ENCODE measurements at regions of chr3 and their contacts with region 1.

Region 1: DNA sequence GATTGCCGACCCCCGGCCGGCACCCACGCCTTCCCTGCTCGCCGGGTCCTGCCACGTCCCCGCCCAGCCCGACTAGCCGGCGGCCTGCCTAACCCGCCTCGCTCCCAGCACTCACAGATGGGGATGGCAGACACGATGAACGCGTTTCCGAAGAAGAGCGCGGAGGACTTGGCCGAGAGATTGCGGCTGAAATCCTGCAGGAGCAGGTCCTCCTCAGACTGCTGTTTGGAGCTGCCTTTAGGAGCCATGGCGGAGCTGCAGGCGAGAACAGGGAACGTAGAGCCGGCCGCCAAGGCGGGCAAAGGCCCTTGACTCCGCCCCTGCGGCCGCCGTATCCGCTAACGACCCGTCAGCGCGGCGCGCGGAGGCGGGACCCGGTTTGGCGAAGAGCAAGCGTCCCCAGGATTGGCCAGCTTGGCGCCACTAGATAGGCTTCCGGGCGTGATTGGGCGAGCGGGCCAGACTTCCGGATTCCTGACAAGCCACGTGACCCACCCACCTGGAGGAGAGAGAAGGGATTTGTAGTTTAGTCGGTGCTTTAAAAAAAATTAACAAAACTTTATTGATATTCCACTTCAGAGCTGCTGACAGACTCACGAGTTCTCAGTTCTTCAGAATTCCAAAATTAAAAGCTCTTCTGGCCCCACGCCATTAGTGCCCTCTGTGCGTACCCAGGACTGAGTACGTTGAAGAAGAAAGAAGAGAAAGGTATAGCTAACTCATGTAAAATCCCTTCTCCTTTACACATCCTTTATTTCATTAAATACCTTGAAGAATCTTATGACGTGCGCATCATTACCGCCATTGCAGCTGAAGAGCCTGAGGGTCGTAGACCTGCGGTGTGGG is at the start of gene SSR3:
- DNase-seq: peak; percentile 99
- H3K4me3 Mint-ChIP-seq: peak within 1 kb of the TSS; percentile 95
- H3K27ac Mint-ChIP-seq: peak within 1 kb of the TSS; percentile 94
- H3K4me1 Mint-ChIP-seq: peaks cover 53% of the 10 kb centered on the region
- H3K27me3 Mint-ChIP-seq: no peaks in the 10 kb centered on the region
- total RNA-seq, gene SSR3: 149 and 162 TPM in 2 replicates

Region 2: GRCh38 chr3:156483961-156484787 is 70.9 kb before region 1 on chr3:
- intact Hi-C with region 1: loop called (anchors 1 kb)
- DNase-seq: peak; percentile 56
- H3K4me3 Mint-ChIP-seq: peak overlapping the region; percentile 73
- H3K27ac Mint-ChIP-seq: peak overlapping the region; percentile 86
- H3K4me1 Mint-ChIP-seq: peaks cover 42% of the 10 kb centered on the region
- H3K27me3 Mint-ChIP-seq: peaks cover 6% of the 10 kb centered on the region

Region 3: DNA sequence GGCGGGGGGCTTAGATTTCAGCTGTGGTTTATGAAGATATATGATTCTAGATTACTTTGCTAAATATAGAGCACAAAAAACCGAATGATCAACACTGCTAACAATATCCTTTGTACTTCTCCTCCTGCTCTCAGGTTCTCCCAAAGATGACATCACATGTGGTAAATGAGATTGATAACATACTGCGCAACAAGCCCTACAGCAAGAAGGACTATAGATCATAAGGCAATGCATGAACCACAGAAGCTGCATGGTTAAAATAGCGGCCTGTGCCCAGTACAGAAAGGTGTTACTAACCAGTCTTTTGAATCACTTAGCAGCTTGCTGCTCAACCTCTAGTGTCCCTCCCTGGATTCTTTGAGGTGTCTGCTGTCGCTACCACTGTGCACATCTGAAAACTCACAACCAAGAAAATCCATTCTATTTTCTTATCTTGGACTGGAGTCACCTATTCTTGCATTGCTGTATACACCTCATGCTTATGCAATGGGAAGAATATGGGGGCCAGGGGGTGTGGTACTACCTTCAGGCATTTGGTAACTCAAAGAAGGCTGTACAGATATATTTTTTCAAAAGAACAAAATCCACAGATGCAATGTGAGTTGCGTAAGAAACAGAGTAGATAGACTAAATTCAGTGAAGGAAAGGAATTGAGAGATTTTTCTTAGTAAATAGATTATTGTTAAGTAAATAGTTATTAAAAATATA is 18.4 kb before region 1 on chr3:
- intact Hi-C with region 1: loop called (anchors 1 kb)
- DNase-seq: no peak
- H3K4me3 Mint-ChIP-seq: no peak overlapping the region
- H3K27ac Mint-ChIP-seq: no peak overlapping the region
- H3K4me1 Mint-ChIP-seq: peaks cover 19% of the 10 kb centered on the region
- H3K27me3 Mint-ChIP-seq: no peaks in the 10 kb centered on the region

Region 4: DNA sequence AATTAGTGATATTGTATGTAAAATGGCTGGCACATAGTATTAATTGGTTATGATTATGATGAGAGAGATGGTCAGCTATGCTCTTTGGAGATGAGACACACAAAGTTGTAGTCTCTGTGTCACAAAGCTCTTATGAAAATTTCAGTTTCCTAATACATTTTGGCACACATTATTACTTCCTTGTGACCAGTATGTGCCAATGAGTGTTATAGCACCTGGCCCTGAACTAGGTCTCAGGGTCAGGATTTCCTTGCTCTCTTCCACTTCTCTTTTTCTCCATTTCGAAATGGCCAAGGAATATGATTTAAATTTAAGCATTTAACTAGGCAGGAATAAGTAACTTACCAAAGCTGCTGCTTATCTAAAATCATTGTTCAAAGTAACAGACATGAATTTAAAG is 147.3 kb after region 1 on chr3:
- intact Hi-C with region 1: no loop called
- DNase-seq: no peak
- H3K4me3 Mint-ChIP-seq: no peak overlapping the region
- H3K27ac Mint-ChIP-seq: no peak overlapping the region
- H3K4me1 Mint-ChIP-seq: peaks cover 68% of the 10 kb centered on the region
- H3K27me3 Mint-ChIP-seq: no peaks in the 10 kb centered on the region

Region 5: DNA sequence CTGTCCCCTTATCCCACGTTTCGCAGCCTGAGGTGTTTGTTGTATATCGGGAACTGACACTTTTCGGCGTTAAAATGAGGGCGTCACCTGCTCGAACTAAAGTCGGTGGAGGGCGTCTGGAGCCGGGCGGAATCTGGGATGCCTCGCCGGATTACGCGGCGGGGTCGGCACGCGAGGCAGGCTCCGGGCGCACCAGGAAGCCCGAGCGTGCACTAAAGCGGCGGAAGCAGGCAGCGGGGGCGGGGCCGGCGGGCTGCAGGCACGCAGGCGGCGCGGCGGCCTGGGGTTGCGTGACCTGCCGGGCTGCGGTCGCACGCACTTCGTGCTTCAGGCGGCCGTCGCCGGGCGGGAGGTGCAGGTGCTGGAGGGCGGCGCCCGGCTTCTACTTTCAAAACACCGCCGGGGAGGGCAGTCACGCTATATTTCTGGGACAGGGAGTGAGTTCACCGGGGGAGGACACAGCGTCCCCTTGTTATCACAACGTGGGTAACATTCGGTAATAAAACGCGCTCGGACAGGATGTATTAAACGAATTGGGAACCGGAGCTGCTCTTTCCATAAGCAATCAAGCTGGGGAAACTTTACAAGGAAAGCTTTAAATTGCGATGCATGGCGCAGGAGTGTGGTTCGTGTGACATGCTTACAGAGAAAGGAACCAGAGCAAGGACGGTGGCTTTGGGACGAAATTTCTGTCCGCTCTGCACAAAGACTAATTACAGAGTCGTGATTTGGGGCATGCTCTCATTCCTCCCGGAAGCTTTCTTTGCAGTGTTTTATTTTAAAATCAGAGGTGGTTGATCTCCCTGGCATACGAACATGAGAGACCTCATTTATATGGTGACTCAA is 262.0 kb after region 1 on chr3:
- intact Hi-C with region 1: loop called (anchors 1 kb)
- DNase-seq: peak; percentile 90
- H3K4me3 Mint-ChIP-seq: peak overlapping the region; percentile 92
- H3K27ac Mint-ChIP-seq: peak overlapping the region; percentile 98
- H3K4me1 Mint-ChIP-seq: peaks cover 75% of the 10 kb centered on the region
- H3K27me3 Mint-ChIP-seq: no peaks in the 10 kb centered on the region

Region 6: DNA sequence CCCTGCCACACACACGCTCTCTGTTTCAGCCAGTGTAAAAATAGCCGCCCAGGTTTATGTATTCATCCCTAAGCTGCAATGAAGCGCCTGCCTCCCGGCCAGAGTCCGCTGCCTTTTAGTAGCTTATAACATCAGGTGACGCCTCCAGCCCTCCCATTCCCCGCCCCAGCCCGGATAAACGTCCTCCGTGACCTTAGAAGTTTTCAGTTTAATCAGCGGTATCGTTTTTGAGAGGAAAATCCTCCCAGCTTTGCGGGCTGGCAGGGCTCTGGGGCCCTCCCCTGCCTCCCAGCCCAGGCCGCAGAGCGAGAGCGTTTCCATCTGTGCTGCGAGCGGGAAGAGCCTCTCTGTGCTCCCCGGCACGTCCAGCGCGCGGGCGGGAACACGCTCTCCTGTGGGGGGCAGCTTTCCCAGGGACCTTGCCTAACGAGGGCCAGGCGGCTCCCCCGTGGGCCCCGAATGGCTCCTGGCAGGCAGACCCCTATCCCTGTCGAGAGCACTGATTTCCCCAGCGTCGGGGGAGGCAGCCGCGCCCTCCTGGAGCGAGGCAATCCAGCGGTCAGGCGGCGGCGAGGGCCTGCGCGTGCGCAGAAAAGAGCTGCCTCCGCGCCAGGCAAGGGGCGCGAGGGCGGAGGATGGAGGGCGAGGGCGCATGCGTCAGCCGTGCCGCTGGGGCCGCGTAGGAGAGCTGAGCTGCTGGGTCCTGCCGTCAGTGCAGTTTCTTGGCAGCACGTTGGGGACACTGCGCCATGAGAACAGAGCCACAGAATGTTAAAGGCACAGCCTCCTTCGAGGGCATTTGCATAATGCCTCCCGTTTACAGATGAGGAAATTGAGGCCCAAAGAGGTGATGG is 533.8 kb after region 1 on chr3:
- intact Hi-C with region 1: loop called (anchors 1 kb)
- DNase-seq: peak; percentile 93
- H3K4me3 Mint-ChIP-seq: peak overlapping the region; percentile 70
- H3K27ac Mint-ChIP-seq: peak overlapping the region; percentile 93
- H3K4me1 Mint-ChIP-seq: peaks cover 76% of the 10 kb centered on the region
- H3K27me3 Mint-ChIP-seq: no peaks in the 10 kb centered on the region

Region 7: DNA sequence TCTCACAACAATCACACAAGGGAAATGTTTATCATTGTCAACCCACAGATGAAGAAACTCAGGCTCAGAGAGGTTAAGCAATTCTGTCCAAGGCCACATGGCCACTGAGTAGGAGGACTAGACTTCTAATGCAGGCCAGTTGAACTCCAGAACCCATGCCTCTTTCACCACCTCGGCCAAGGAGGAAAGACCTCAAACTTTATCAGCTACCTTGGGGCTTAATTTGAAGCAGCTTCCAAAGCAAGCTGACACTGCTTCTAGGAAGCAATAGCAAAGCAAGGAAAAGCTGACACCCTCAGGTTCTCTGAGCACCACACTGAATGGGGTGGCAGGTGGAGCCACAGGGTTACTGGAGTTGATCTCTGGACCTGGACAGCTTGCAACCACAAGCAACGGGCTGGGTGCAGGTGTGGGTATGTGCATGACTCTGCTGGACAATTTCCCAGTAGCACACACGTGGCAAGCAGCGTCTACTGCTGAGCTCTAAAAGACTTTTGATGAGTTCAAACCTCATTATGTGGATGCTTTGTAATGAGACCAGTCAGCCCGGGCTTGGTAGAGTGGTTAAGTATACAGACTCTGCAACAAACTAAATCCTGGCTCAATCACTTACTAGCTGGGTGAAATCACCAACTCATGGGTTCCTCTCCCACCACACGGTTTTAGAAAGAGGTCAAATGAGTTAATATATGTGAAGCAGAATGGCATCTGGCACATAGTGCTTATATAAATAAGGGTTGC is 581.8 kb after region 1 on chr3:
- intact Hi-C with region 1: loop called (anchors 2 kb)
- DNase-seq: no peak
- H3K4me3 Mint-ChIP-seq: no peak overlapping the region
- H3K27ac Mint-ChIP-seq: peak overlapping the region; percentile 35
- H3K4me1 Mint-ChIP-seq: peaks cover 57% of the 10 kb centered on the region
- H3K27me3 Mint-ChIP-seq: no peaks in the 10 kb centered on the region

Region 8: DNA sequence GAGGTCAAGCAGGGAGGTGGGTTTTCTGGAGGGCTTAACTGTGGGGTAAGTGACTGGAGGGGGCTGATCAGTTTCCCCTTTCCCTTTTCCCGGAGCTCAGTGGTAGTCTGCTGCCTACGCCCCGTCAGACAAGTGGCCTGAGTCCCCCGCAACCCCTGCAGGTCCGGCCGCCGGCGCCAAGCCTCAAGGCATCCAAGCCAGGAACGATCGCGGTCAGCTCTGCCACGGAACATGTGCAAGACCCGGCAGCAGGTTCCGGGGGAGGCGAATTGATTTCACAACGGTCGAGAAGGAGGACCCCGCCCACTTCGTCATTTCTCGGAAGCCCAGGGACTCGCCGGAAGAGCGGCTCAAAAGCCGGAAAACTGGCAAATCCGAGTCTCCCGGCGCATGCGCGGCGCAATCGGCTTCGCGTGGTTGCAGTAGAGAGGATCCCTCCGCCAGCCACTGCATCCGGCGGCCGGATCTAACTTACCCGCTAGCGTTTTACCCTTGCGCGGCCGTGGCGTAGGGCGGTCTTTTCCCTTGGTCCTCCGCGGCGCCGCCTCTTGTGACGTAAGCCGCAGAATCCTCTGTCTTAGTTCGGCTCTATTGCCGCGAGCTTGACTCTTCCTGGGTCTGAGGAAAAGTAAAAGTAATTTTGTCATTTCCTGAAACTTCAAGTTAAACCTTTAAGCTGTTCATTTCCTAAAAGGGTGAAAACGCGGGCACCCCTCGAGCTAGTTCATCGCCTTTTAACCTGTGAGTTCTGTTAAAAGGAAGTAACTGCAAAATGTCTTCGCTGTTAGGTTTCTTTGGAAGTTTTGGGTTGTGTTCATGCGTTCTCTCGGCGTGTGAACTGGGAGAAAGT is 619.8 kb after region 1 on chr3:
- intact Hi-C with region 1: loop called (anchors 1 kb)
- DNase-seq: peak; percentile 98
- H3K4me3 Mint-ChIP-seq: peak overlapping the region; percentile 94
- H3K27ac Mint-ChIP-seq: peak overlapping the region; percentile 96
- H3K4me1 Mint-ChIP-seq: peaks cover 47% of the 10 kb centered on the region
- H3K27me3 Mint-ChIP-seq: peaks cover 2% of the 10 kb centered on the region